ENCODE measurements at regions of chr1 and their contacts with region 1.

Region 1: GRCh38 chr1:115807723-115808122 is 33.2 kb downstream of the NHLH2 start:
- DNase-seq: peak; percentile 60 to 75 (median 64)
- ATAC-seq: peak; percentile 86
- H3K4me3 ChIP-seq: no peak overlapping the region
- H3K27ac ChIP-seq: no peak overlapping the region
- H3K4me1 ChIP-seq: no peaks in the 10 kb centered on the region; a peak in 1 of 5 replicates
- H3K27me3 ChIP-seq: 0 out of 5 replicates have a peak, but pooled peaks cover 0 to 3% of the 10 kb centered on the region in 2 experiments
- CTCF ChIP-seq: peak; percentile 60 to 77 (median 71); a peak in 5 of 6 replicates
- EP300 ChIP-seq: no peak
- POLR2A ChIP-seq: no peak
- RAD21 ChIP-seq: peak; percentile 80 to 87

Region 2: DNA sequence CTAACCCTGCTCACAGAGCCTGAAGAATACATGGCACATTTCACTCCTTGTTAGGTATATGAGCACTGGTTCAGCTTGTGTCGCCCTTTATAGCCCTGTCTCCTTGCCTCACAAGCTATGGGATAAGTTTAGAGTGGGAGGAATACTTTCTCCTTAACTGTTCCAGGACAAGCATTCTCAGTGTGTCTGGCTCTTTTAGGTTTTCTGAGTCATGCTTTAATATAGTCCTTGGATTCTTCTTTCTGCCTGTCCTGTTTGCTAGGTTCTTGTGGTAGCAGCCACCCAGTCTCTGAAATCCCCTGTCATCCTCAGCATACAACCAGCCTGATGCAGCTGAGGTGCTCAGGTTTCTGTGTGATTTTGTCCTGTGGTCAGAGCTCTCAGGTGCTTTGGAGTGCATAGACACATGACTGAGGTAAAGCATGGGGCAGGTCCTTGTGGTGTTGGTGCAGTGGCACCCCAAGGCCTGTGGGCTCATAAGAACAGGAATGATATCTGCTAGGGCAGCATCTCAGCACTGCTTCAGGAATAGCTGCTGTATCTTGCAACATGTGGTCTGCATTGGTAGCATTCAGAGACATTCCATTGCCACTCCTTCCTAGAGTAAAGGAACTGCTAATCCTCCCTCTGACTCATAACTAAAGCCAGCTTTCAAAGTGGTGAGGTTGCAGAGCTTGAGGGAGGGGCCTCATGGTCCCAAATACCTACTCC is 25.0 kb before region 1 on chr1:
- CTCF ChIA-PET with region 1: no interaction called
- POLR2A ChIA-PET with region 1: no interaction called
- in situ Hi-C with region 1: no loop called
- intact Hi-C with region 1: no loop called
- DNase-seq: no peak
- ATAC-seq: no peak
- H3K4me3 ChIP-seq: no peak overlapping the region
- H3K27ac ChIP-seq: no peak overlapping the region
- H3K4me1 ChIP-seq: no peaks in the 10 kb centered on the region
- H3K27me3 ChIP-seq: no peaks in the 10 kb centered on the region
- CTCF ChIP-seq: no peak
- EP300 ChIP-seq: no peak
- POLR2A ChIP-seq: no peak
- RAD21 ChIP-seq: no peak

Region 3: GRCh38 chr1:115879977-115880376 is 72.3 kb after region 1 on chr1:
- CTCF ChIA-PET with region 1: interaction called, 3 read pairs
- POLR2A ChIA-PET with region 1: no interaction called
- in situ Hi-C with region 1: no loop called
- intact Hi-C with region 1: loop called (anchors 5 kb)
- DNase-seq: peak in 2 of 4 experiments; percentile 17 to 20
- ATAC-seq: peak; percentile 56; the same call in 1 of the 3 replicates
- H3K4me3 ChIP-seq: no peak overlapping the region
- H3K27ac ChIP-seq: no peak overlapping the region
- H3K4me1 ChIP-seq: no peaks in the 10 kb centered on the region
- H3K27me3 ChIP-seq: peaks cover 8 to 14% of the 10 kb centered on the region in 2 experiments; a peak in 3 of 5 replicates
- CTCF ChIP-seq: peak; percentile 34 to 42 (median 38); a peak in 4 of 6 replicates
- EP300 ChIP-seq: no peak
- POLR2A ChIP-seq: no peak
- RAD21 ChIP-seq: peak; percentile 44 to 53

Region 4: DNA sequence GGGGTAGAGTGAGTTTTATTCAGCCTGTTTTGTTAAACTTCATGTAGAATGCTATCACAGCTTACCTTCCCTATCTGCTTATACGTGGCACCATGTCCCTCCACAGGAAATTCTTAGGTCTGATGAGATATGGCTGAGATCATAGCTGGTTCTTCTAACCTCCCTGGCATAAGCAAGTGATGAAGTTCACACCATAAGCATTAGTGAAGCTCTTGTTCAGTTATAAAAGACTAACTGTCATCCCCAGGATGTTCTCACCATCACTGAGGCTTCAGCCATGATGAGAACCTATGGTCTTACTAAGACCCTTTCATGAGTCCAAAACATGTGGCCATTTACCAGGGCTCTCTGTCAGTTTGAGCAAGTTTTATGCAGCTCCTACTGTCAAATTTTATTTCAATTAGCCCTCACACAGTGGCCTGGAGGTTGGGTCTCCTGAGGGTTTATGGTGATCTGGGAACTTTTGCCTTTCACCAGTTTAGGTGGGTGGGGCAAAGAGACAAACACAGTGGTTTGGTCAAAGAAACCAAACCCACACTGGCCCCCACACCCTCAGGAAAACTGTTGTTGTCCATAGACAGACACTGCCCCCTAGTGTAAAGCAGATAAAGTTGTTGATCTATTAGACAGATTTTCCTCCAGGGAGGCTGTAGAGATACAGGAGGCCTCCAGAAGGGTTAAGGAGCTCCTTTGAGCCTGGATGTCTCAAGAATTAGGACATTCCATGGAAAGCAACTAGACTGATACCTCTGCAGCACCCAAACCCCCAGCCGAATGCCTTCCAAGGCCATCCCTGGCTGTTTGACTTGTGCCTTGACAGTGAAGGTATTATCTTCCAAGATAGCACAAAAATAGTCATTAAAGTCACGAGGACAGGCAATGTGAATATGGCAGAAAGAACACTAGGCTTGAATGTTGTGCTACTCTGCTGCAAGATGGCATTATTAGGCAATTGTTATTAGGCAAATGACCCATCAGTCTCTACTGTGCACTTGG is 173.6 kb after region 1 on chr1:
- CTCF ChIA-PET with region 1: interaction called, 15 read pairs
- POLR2A ChIA-PET with region 1: no interaction called
- in situ Hi-C with region 1: loop called (anchors 5 kb)
- intact Hi-C with region 1: loop called (anchors 1 kb)
- DNase-seq: peak; percentile 58 to 73 (median 67)
- ATAC-seq: peak; percentile 84
- H3K4me3 ChIP-seq: no peak overlapping the region
- H3K27ac ChIP-seq: no peak overlapping the region
- H3K4me1 ChIP-seq: peaks cover 0 to 6% of the 10 kb centered on the region in 2 experiments; a peak in 2 of 5 replicates
- H3K27me3 ChIP-seq: peaks cover 8 to 12% of the 10 kb centered on the region in 2 experiments; a peak in 4 of 5 replicates
- CTCF ChIP-seq: peak; percentile 80 to 91 (median 81)
- EP300 ChIP-seq: no peak
- POLR2A ChIP-seq: no peak
- RAD21 ChIP-seq: peak; percentile 89

Region 5: GRCh38 chr1:116001739-116002487 is 194.2 kb after region 1 on chr1:
- CTCF ChIA-PET with region 1: no interaction called
- POLR2A ChIA-PET with region 1: no interaction called
- in situ Hi-C with region 1: no loop called
- intact Hi-C with region 1: no loop called
- DNase-seq: no peak
- ATAC-seq: no peak
- H3K4me3 ChIP-seq: no peak overlapping the region
- H3K27ac ChIP-seq: no peak overlapping the region
- H3K4me1 ChIP-seq: no peaks in the 10 kb centered on the region
- H3K27me3 ChIP-seq: no peaks in the 10 kb centered on the region
- CTCF ChIP-seq: no peak
- EP300 ChIP-seq: no peak
- POLR2A ChIP-seq: no peak
- RAD21 ChIP-seq: no peak

Region 6: GRCh38 chr1:116504308-116505156 is 696.8 kb after region 1 on chr1:
- CTCF ChIA-PET with region 1: no interaction called
- POLR2A ChIA-PET with region 1: no interaction called
- in situ Hi-C with region 1: loop called (anchors 10 kb)
- intact Hi-C with region 1: no loop called
- DNase-seq: peak; percentile 90 to 97 (median 93)
- ATAC-seq: peak; percentile 91
- H3K4me3 ChIP-seq: no peak overlapping the region
- H3K27ac ChIP-seq: peak overlapping the region; percentile 99
- H3K4me1 ChIP-seq: peaks cover 45 to 82% of the 10 kb centered on the region in 2 experiments
- H3K27me3 ChIP-seq: no peaks in the 10 kb centered on the region
- CTCF ChIP-seq: no peak
- EP300 ChIP-seq: peak; percentile 80
- POLR2A ChIP-seq: peak; percentile 60
- RAD21 ChIP-seq: peak in 1 of 2 experiments; percentile 36; a peak in 1 of 4 replicates